Thyroid gland (tissue), 4 donors: ENCODE measurements at regions of chrX and their contacts with region 1.

Region 1: GRCh38 chrX:111869639-111870034 is 6.3 kb upstream of the TRPC5OS start:
- DNase-seq: peak; percentile 21 to 30
- H3K4me3 ChIP-seq: no peak overlapping the region
- H3K27ac ChIP-seq: peak overlapping the region in 1 of 3 donors; percentile 69
- H3K4me1 ChIP-seq: peaks cover 0 to 13% of the 10 kb centered on the region in 2 donors
- H3K27me3 ChIP-seq: peaks cover 7% of the 10 kb centered on the region
- CTCF ChIP-seq: peak; percentile 25 to 67 (median 60)
- POLR2A ChIP-seq: no peak

Region 2: GRCh38 chrX:112147206-112147605 is 277.6 kb after region 1 on chrX:
- intact Hi-C with region 1: loop called (anchors 10 kb)
- DNase-seq: peak; percentile 29 to 33
- H3K4me3 ChIP-seq: no peak overlapping the region
- H3K27ac ChIP-seq: no peak overlapping the region
- H3K4me1 ChIP-seq: no peaks in the 10 kb centered on the region
- H3K27me3 ChIP-seq: no peaks in the 10 kb centered on the region
- CTCF ChIP-seq: peak in 5 of 6 experiments; percentile 26 to 53 (median 45)
- POLR2A ChIP-seq: no peak